ENCODE measurements at regions of chr4 and their contacts with region 1.

Region 1: DNA sequence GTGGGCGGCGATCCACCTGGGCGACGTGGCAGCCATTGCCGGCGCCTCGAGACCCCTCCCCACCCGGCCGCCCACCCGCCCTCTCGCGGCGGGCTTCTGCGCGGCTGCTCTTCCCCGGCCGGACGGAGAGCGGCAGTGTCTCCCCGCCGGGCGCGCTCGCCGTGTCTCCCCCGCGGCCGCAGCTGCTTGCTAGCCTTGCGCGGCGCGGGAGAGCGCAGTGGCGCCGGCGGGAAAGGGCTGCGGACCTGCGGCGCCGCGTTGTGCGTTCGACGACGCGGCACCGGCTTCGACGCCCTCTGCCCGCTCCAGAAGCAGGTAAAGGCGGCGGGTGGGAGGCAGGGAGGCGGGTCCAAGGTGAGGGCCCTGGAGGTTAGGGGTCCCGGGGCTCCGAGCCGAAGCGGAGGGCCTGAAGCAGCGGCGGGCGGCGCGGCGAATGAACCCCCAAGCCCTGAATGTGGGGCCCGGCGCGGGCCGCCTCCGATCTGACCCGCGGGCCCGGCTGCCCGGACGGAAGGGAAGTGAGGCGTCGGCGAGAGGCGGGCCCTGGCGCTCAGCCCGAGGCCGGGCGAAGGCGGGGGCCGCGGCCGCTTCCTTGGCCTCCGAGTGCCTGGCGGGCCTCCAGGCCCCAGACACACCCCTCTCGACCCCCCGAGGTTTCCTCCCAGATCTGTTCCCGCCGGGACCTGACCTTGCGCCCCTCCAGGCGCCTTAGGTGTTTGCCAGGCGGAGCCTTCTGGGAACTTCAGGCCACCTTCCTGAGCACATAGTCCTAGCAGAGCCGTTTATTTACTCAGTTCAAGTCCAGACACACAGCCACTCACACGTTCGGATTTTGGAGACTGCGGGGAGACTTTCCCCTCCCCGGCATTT is at the start of gene N4BP2:
- DNase-seq: peak; percentile 88
- ATAC-seq: peak; percentile 61
- H3K4me3 Mint-ChIP-seq: peak within 1 kb of the TSS; percentile 92
- H3K27ac Mint-ChIP-seq: peak within 1 kb of the TSS; percentile 100
- H3K4me1 Mint-ChIP-seq: peaks cover 30% of the 10 kb centered on the region
- H3K27me3 Mint-ChIP-seq: no peaks in the 10 kb centered on the region
- total RNA-seq, gene N4BP2: 16.2 to 23.2 TPM

Region 2: GRCh38 chr4:38815885-38816782 is 1240.8 kb before region 1 on chr4:
- CTCF ChIA-PET with region 1: no interaction called
- POLR2A ChIA-PET with region 1: no interaction called
- intact Hi-C with region 1: no loop called
- DNase-seq: no peak
- ATAC-seq: peak; percentile 39
- H3K4me3 Mint-ChIP-seq: no peak overlapping the region
- H3K27ac Mint-ChIP-seq: no peak overlapping the region
- H3K4me1 Mint-ChIP-seq: peaks cover 17% of the 10 kb centered on the region
- H3K27me3 Mint-ChIP-seq: no peaks in the 10 kb centered on the region

Region 3: DNA sequence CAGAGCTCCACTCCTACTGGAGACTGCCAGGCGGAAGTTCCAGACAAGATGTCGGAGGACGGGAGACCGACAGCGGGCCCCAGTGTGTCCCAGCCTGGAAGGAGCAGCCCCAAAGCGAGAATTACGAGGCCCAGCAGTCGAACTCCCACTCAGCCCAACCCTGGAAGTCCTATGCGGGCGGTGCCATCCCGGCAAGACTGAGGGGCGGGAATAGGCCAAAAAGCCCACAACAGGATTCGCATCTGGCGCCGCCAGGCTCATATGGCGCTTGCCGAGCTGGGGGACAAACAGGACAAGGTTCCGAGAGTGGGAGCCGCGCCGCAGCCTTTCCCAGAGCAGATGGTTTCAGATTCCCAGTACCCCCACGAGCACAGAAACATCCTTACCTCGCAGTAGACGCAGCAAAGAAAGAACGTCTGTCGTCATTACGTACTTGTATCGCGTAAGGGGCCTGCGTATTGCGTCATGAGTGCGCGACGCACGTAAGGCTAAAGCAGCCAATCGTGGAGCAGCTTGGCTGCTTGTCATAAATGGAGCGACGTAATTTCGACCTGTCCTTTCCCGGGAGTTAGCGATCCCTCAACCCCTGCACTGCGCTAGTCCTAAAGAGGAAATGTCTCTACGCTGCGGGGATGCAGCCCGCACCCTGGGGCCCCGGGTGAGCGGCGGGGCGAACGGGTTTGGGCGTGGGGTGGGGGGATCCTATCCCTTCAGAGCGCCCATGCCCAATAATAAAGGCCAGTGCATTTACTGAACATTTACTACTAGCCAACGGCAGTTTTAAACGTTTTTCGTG is 598.2 kb before region 1 on chr4 and contains the starts of genes LIAS and RPL9:
- CTCF ChIA-PET with region 1: no interaction called
- POLR2A ChIA-PET with region 1: no interaction called
- intact Hi-C with region 1: loop called in 1 of 2 experiments (anchors 2 kb)
- DNase-seq: peak; percentile 96
- ATAC-seq: peak; percentile 88
- H3K4me3 Mint-ChIP-seq: peak within 1 kb of the TSS; percentile 98
- H3K27ac Mint-ChIP-seq: peak within 1 kb of the TSS; percentile 100
- H3K4me1 Mint-ChIP-seq: peaks cover 44% of the 10 kb centered on the region
- H3K27me3 Mint-ChIP-seq: no peaks in the 10 kb centered on the region
- total RNA-seq, gene LIAS: 30.7 to 35.5 TPM
- total RNA-seq, gene RPL9: 1,442 to 2,369 TPM

Region 4: GRCh38 chr4:40046311-40046980 is 10.5 kb before region 1 on chr4:
- CTCF ChIA-PET with region 1: interaction called, 3 read pairs
- POLR2A ChIA-PET with region 1: interaction called, 4 read pairs
- intact Hi-C with region 1: loop called in 1 of 2 experiments (anchors 1 kb)
- DNase-seq: peak; percentile 67
- ATAC-seq: peak; percentile 92
- H3K4me3 Mint-ChIP-seq: peak overlapping the region; percentile 9
- H3K27ac Mint-ChIP-seq: peak overlapping the region; percentile 86
- H3K4me1 Mint-ChIP-seq: peaks cover 9% of the 10 kb centered on the region
- H3K27me3 Mint-ChIP-seq: no peaks in the 10 kb centered on the region

Region 5: DNA sequence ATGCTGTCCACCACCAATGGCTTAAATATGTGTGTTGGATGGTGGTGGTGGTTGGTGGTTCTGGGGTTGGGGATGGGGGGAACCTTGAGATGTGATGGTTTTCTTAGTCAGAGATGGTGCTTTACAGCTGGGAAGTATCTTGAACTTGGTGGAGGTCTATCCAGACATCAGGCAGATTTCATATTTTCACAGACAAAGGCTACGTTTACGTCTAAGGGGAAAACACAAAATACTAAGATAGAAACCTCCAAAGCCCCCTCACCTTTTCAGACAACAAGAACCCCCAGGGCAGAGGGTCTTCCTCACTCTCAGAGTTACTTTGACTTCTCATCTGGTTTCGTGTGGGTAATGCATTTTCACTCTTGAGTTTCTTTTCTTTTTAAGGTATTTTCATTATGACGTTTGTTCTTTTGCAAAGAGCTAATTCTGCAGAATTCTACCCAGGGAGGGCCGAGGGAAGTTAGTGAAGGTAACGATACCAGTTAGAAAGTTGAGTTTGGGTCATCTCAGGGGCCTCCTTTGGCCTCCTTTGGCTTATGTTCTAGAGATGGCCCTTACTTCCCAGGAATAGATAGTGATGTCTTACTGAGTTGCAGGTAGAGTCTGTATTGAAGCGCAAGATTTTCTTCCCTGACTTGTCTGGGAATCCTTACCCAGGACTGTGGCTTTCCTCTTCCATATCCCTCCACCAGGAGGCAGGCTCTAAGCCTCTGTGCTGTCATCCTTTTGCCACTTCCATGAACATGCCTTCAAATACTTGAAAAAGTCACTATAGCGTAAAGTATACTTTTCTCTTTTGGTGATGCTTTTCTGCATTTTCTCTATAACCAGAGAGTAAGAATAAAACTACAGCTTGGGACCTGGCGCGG is 171.8 kb after region 1 on chr4:
- CTCF ChIA-PET with region 1: no interaction called
- POLR2A ChIA-PET with region 1: interaction called, 5 read pairs
- intact Hi-C with region 1: loop called in 1 of 2 experiments (anchors 1 kb)
- DNase-seq: peak; percentile 64
- ATAC-seq: peak; percentile 34
- H3K4me3 Mint-ChIP-seq: peak overlapping the region; percentile 61
- H3K27ac Mint-ChIP-seq: peak overlapping the region; percentile 96
- H3K4me1 Mint-ChIP-seq: peaks cover 93% of the 10 kb centered on the region
- H3K27me3 Mint-ChIP-seq: no peaks in the 10 kb centered on the region

Region 6: GRCh38 chr4:40438384-40439026 is 381.6 kb after region 1 on chr4:
- CTCF ChIA-PET with region 1: no interaction called
- POLR2A ChIA-PET with region 1: interaction called, 7 read pairs
- intact Hi-C with region 1: loop called in 1 of 2 experiments (anchors 5 kb)
- DNase-seq: no peak
- ATAC-seq: no peak
- H3K4me3 Mint-ChIP-seq: no peak overlapping the region
- H3K27ac Mint-ChIP-seq: no peak overlapping the region
- H3K4me1 Mint-ChIP-seq: peaks cover 13% of the 10 kb centered on the region
- H3K27me3 Mint-ChIP-seq: no peaks in the 10 kb centered on the region

Region 7: GRCh38 chr4:40737879-40738278 is 680.9 kb after region 1 on chr4:
- CTCF ChIA-PET with region 1: no interaction called
- POLR2A ChIA-PET with region 1: no interaction called
- intact Hi-C with region 1: no loop called
- DNase-seq: no peak
- ATAC-seq: no peak
- H3K4me3 Mint-ChIP-seq: no peak overlapping the region
- H3K27ac Mint-ChIP-seq: no peak overlapping the region
- H3K4me1 Mint-ChIP-seq: no peaks in the 10 kb centered on the region
- H3K27me3 Mint-ChIP-seq: peaks cover 6% of the 10 kb centered on the region

Region 8: GRCh38 chr4:40908702-40909362 is 851.9 kb after region 1 on chr4:
- CTCF ChIA-PET with region 1: no interaction called
- POLR2A ChIA-PET with region 1: no interaction called
- intact Hi-C with region 1: loop called in 1 of 2 experiments (anchors 2 kb)
- DNase-seq: peak; percentile 90
- ATAC-seq: peak; percentile 85
- H3K4me3 Mint-ChIP-seq: peak overlapping the region; percentile 26
- H3K27ac Mint-ChIP-seq: peak overlapping the region; percentile 95
- H3K4me1 Mint-ChIP-seq: peaks cover 36% of the 10 kb centered on the region
- H3K27me3 Mint-ChIP-seq: no peaks in the 10 kb centered on the region